ENCODE measurements at regions of chr2 and their contacts with region 1.

Region 1: DNA sequence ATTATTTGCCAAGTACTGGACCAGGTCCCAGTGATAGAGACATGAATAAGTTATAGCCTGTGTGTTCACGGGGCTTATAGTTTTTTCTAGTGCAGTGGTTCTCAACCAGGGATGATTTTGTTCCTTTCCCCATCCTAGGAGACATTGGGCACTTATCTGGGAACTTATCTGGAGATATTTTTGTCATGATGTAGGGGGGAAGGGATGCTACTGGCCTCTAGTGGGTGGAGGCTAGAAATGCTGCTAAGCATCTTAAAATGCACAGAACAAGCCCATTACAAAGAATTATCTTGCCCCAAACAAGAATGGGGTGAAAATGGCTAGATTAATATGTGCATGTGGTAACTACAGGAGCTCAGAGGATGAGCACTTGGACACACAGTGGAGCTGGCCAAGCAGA is 75.2 kb downstream of the KLHL29 start:
- DNase-seq: no peak
- H3K4me3 ChIP-seq: no peak overlapping the region
- H3K27ac ChIP-seq: no peak overlapping the region
- H3K27me3 ChIP-seq: no peaks in the 10 kb centered on the region
- CTCF ChIP-seq: peak; percentile 68

Region 2: GRCh38 chr2:23449413-23449812 is 10.8 kb before region 1 on chr2:
- CTCF ChIA-PET with region 1: interaction called, 12 read pairs
- POLR2A ChIA-PET with region 1: no interaction called
- DNase-seq: no peak
- H3K4me3 ChIP-seq: no peak overlapping the region
- H3K27ac ChIP-seq: no peak overlapping the region
- H3K27me3 ChIP-seq: no peaks in the 10 kb centered on the region
- CTCF ChIP-seq: no peak

Region 3: DNA sequence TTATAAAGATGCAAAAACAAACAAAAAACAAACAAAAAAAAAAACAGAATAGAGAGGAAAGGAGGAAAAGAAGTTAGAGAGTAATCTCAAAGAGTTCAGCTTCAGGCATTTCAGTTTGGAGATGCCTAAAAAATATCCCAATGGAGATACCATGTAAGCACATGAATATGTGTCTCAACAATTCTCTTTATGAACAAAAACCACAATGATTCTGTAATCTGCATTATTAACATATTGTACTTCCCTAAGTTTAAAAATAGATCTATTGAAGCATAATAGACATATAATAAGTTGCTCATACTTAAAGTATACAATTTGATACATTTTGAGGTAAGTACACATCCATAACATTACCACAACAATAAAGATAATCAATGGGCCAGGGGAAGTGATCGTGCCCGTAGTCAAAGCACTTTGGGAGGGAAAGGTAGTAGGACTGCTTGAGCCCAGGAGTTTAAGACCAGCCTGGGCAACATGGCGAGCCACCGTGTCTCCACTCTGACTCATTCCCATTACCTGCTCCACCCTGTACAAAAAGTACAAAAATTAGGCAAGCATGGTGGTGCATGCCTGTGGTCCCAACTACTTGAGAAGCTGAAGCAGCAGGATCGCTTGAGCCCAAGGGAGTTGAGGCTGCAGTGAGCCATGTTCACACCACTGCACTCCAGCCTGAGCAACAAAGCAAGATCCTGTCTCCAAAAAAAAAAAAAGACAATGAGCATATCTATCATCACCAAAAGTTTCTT is 307.8 kb after region 1 on chr2:
- CTCF ChIA-PET with region 1: no interaction called
- POLR2A ChIA-PET with region 1: no interaction called
- DNase-seq: no peak
- H3K4me3 ChIP-seq: no peak overlapping the region
- H3K27ac ChIP-seq: no peak overlapping the region
- H3K27me3 ChIP-seq: no peaks in the 10 kb centered on the region
- CTCF ChIP-seq: no peak

Region 4: GRCh38 chr2:23994566-23994965 is 534.3 kb after region 1 on chr2:
- CTCF ChIA-PET with region 1: no interaction called
- POLR2A ChIA-PET with region 1: no interaction called
- DNase-seq: no peak
- H3K4me3 ChIP-seq: no peak overlapping the region
- H3K27ac ChIP-seq: no peak overlapping the region
- H3K27me3 ChIP-seq: no peaks in the 10 kb centered on the region
- CTCF ChIP-seq: no peak